Head of caudate nucleus (tissue), 42 donors: ENCODE measurements at regions of chr11 and their contacts with region 1.

Region 1: GRCh38 chr11:1546536-1547400 is 25.3 kb downstream of the DUSP8 start:
- DNase-seq: peak in 35 of 42 donors; percentile 38 to 83 (median 69)

Region 2: DNA sequence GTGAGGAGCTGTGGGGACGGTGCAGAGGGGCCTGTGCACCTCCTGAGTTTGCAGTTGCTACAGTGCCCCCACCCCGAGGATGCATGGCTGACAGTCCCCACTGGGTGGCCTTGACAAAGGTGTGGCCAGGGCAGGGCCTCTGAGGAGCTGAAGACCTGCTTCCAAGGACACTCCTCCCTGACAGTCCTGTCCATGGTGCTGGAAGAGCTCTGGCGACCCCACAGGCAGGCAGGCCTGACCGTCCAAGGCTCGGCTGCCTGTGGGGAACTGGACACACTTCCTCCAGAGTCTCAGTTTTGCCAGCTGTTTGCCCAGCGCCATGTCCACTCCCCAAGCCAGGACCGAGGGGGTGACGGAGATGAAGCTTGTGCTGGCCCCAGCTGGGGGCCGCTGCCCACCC is 124.3 kb before region 1 on chr11:
- intact Hi-C with region 1: no loop called
- DNase-seq: no peak

Region 3: GRCh38 chr11:1574238-1574932 is 27.6 kb after region 1 on chr11:
- intact Hi-C with region 1: loop called (anchors 2 kb)
- DNase-seq: peak in 36 of 42 donors; percentile 54 to 87 (median 73)

Region 4: GRCh38 chr11:1632053-1632714 is 85.4 kb after region 1 on chr11:
- intact Hi-C with region 1: loop called (anchors 5 kb)
- DNase-seq: no peak